ENCODE measurements at regions of chr1 and their contacts with region 1.

Region 1: GRCh38 chr1:212994926-212995325 is 20.7 kb downstream of the ANGEL2 start:
- DNase-seq: no peak
- H3K4me3 Mint-ChIP-seq: no peak overlapping the region
- H3K27ac Mint-ChIP-seq: no peak overlapping the region
- H3K4me1 Mint-ChIP-seq: peaks cover 1% of the 10 kb centered on the region
- H3K27me3 Mint-ChIP-seq: no peaks in the 10 kb centered on the region

Region 2: GRCh38 chr1:212477014-212477679 is 517.8 kb before region 1 on chr1:
- CTCF ChIA-PET with region 1: interaction called, 15 read pairs
- DNase-seq: peak; percentile 85
- H3K4me3 Mint-ChIP-seq: no peak overlapping the region
- H3K27ac Mint-ChIP-seq: no peak overlapping the region
- H3K4me1 Mint-ChIP-seq: peaks cover 22% of the 10 kb centered on the region
- H3K27me3 Mint-ChIP-seq: peaks cover 49% of the 10 kb centered on the region

Region 3: DNA sequence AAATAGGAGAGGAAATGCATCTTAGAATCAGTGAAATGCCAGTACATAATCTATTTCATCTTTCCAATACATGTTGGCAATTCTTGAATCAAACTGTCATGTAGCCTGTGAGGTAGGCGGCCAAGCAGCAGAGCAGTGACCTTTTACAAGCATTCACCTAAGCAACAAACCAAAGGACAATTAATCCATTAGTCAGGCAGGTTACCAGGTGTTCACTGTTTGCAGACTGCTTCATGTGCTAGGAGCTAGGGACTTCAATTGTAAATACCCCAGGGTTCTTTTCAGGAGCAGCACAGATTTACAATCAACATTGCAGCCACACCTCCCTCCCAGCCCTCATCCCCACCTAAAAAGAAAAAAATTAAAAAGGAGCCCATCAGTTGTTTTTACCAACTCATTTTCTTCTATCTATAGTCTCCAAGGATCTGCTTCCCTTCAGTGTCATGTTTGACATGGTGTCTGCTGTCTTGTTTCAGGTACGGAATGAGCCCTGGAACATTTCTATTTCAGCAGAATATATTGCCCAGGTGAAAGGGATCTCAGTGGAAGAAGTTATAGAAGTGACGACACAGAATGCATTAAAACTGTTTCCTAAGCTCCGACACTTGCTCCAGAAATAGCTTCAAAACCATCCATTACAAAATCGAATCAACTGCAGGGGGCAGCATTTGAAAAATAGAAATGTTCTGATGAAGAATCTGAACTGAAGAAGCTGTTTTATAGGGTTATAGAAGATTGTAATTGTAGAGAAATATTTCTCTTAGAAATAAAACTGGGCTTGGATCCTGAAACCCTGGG is 180.2 kb before region 1 on chr1:
- CTCF ChIA-PET with region 1: interaction called, 10 read pairs
- DNase-seq: no peak
- H3K4me3 Mint-ChIP-seq: no peak overlapping the region
- H3K27ac Mint-ChIP-seq: no peak overlapping the region
- H3K4me1 Mint-ChIP-seq: peaks cover 2% of the 10 kb centered on the region
- H3K27me3 Mint-ChIP-seq: no peaks in the 10 kb centered on the region

Region 4: GRCh38 chr1:212920896-212921295 is 74.0 kb before region 1 on chr1:
- CTCF ChIA-PET with region 1: interaction called, 11 read pairs
- DNase-seq: no peak
- H3K4me3 Mint-ChIP-seq: no peak overlapping the region
- H3K27ac Mint-ChIP-seq: no peak overlapping the region
- H3K4me1 Mint-ChIP-seq: no peaks in the 10 kb centered on the region
- H3K27me3 Mint-ChIP-seq: peaks cover 60% of the 10 kb centered on the region

Region 5: GRCh38 chr1:212981571-212982328 is 13.2 kb before region 1 on chr1:
- CTCF ChIA-PET with region 1: interaction called, 10 read pairs
- DNase-seq: no peak
- H3K4me3 Mint-ChIP-seq: no peak overlapping the region
- H3K27ac Mint-ChIP-seq: no peak overlapping the region
- H3K4me1 Mint-ChIP-seq: peaks cover 7% of the 10 kb centered on the region
- H3K27me3 Mint-ChIP-seq: peaks cover 7% of the 10 kb centered on the region

Region 6: DNA sequence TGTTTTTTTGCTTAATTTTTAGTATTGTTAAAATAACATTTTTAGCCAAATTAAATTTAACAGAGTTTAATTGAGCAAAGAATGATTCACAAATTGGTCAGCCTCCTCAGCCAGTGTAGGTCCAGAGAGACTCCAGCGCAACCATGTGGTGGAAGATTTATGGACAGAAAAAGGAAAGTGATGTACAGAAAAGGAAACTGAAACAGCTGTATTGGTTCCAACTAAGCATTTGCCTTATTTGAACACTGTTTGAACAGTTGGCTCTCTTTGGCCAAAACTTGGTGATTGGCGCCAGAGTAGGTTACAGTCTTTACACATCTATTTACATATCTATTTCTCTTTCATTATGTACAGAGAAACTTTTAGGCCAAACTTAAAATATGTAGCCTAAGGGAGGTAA is 75.5 kb after region 1 on chr1:
- CTCF ChIA-PET with region 1: interaction called, 11 read pairs
- DNase-seq: peak; percentile 43
- H3K4me3 Mint-ChIP-seq: no peak overlapping the region
- H3K27ac Mint-ChIP-seq: no peak overlapping the region
- H3K4me1 Mint-ChIP-seq: peaks cover 27% of the 10 kb centered on the region
- H3K27me3 Mint-ChIP-seq: no peaks in the 10 kb centered on the region

Region 7: GRCh38 chr1:213094446-213094845 is 99.5 kb after region 1 on chr1:
- CTCF ChIA-PET with region 1: no interaction called
- DNase-seq: no peak
- H3K4me3 Mint-ChIP-seq: no peak overlapping the region
- H3K27ac Mint-ChIP-seq: no peak overlapping the region
- H3K4me1 Mint-ChIP-seq: peaks cover 8% of the 10 kb centered on the region
- H3K27me3 Mint-ChIP-seq: no peaks in the 10 kb centered on the region

Region 8: GRCh38 chr1:213244664-213245091 is 249.8 kb after region 1 on chr1:
- CTCF ChIA-PET with region 1: no interaction called
- DNase-seq: peak; percentile 25
- H3K4me3 Mint-ChIP-seq: no peak overlapping the region
- H3K27ac Mint-ChIP-seq: no peak overlapping the region
- H3K4me1 Mint-ChIP-seq: no peaks in the 10 kb centered on the region
- H3K27me3 Mint-ChIP-seq: no peaks in the 10 kb centered on the region

Measured in activated naive CD4-positive, alpha-beta T cell treated with anti-CD3 and anti-CD28 coated beads, Interleukin-2, amount 10 ng/mL, durations not matched to agents 7 days and 5 days (primary cell).